ENCODE measurements at regions of chrX and their contacts with region 1.

Region 1: DNA sequence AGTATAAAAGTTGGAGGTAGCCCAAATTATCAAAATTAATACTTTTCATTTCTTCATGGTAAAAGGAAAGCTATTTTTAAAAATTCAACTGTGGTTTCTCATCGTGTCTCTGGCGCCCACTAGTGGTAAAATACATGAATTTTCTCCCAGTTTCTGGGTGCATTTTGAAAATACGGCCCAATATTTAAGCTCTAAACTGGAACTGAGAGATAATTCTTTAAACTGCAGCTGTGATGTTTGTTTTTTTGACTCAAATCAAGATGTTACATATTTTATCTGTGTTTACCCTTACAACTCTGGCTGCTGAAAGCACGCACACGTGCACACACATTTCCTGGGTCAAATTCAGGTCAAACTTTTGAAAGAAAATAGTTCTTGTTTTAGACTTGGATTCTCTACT is 123.9 kb upstream of the ACSL4 start:
- DNase-seq: no peak
- H3K4me3 Mint-ChIP-seq: no peak overlapping the region
- H3K27ac Mint-ChIP-seq: no peak overlapping the region
- H3K4me1 Mint-ChIP-seq: peaks cover 3% of the 10 kb centered on the region
- H3K27me3 Mint-ChIP-seq: no peaks in the 10 kb centered on the region

Region 2: GRCh38 chrX:109485470-109486340 is 371.3 kb before region 1 on chrX:
- CTCF ChIA-PET with region 1: interaction called, 21 read pairs
- POLR2A ChIA-PET with region 1: no interaction called
- intact Hi-C with region 1: loop called (anchors 2 kb)
- DNase-seq: peak; percentile 64
- H3K4me3 Mint-ChIP-seq: no peak overlapping the region
- H3K27ac Mint-ChIP-seq: no peak overlapping the region
- H3K4me1 Mint-ChIP-seq: no peaks in the 10 kb centered on the region
- H3K27me3 Mint-ChIP-seq: peaks cover 3% of the 10 kb centered on the region

Region 3: DNA sequence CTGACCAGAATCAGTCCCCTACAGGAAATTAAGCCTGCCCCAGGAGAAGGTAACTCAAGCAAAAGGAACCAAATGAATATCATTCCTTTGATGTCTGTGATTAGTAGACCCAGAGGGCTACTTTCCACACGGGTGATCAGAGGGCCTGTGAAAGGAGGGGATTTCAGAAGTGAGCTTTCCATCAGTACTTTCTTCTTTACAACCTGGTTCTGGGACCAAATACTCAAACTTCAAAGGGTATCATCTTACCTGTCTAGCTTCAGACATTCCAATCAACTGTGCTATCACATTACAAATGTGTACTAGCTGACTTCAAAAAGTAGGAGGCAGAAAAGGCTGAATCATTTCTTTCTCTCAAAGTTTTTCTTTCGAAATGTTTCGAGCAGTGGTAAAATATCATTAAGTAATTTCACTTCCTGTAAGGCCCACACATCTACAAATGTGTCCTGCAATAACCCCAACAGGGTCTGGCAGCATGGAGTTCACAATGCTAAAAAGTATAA is 147.8 kb before region 1 on chrX:
- CTCF ChIA-PET with region 1: interaction called, 149 read pairs
- POLR2A ChIA-PET with region 1: interaction called, 3 read pairs
- intact Hi-C with region 1: loop called (anchors 1 kb)
- DNase-seq: no peak
- H3K4me3 Mint-ChIP-seq: no peak overlapping the region
- H3K27ac Mint-ChIP-seq: peak overlapping the region; percentile 46
- H3K4me1 Mint-ChIP-seq: peaks cover 64% of the 10 kb centered on the region
- H3K27me3 Mint-ChIP-seq: no peaks in the 10 kb centered on the region

Region 4: GRCh38 chrX:109714340-109714958 is 142.5 kb before region 1 on chrX:
- CTCF ChIA-PET with region 1: interaction called, 149 read pairs
- POLR2A ChIA-PET with region 1: interaction called, 3 read pairs
- intact Hi-C with region 1: loop called (anchors 1 kb)
- DNase-seq: no peak
- H3K4me3 Mint-ChIP-seq: no peak overlapping the region
- H3K27ac Mint-ChIP-seq: no peak overlapping the region
- H3K4me1 Mint-ChIP-seq: peaks cover 42% of the 10 kb centered on the region
- H3K27me3 Mint-ChIP-seq: no peaks in the 10 kb centered on the region

Region 5: GRCh38 chrX:109826954-109827708 is 29.8 kb before region 1 on chrX:
- CTCF ChIA-PET with region 1: interaction called, 10 read pairs
- POLR2A ChIA-PET with region 1: interaction called, 5 read pairs
- intact Hi-C with region 1: no loop called
- DNase-seq: no peak
- H3K4me3 Mint-ChIP-seq: no peak overlapping the region
- H3K27ac Mint-ChIP-seq: no peak overlapping the region
- H3K4me1 Mint-ChIP-seq: peaks cover 2% of the 10 kb centered on the region
- H3K27me3 Mint-ChIP-seq: no peaks in the 10 kb centered on the region

Region 6: DNA sequence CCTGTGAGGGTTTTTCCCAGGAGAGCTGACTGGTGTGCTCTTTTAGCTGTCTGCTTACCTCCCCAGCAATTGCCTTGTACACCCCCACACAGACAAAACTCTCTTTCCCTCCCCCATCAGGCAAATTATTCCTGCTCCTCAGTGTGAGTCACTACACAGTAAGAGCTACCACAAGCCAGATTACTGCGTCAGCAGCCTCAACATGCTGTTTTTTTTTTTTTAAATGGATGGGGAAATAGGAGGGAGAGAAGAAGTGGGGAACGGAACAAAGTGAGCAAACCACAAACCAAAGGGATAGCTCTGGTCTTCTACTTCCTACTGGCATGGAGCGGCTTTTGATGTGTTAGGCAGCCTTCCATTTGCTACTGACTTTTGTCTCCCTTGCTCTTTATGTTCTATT is 16.4 kb before region 1 on chrX:
- CTCF ChIA-PET with region 1: interaction called, 10 read pairs
- POLR2A ChIA-PET with region 1: interaction called, 3 read pairs
- intact Hi-C with region 1: no loop called
- DNase-seq: peak; percentile 18
- H3K4me3 Mint-ChIP-seq: no peak overlapping the region
- H3K27ac Mint-ChIP-seq: no peak overlapping the region
- H3K4me1 Mint-ChIP-seq: peaks cover 3% of the 10 kb centered on the region
- H3K27me3 Mint-ChIP-seq: no peaks in the 10 kb centered on the region

Region 7: GRCh38 chrX:109890895-109891502 is 34.0 kb after region 1 on chrX:
- CTCF ChIA-PET with region 1: interaction called, 17 read pairs
- POLR2A ChIA-PET with region 1: no interaction called
- intact Hi-C with region 1: no loop called
- DNase-seq: peak; percentile 52
- H3K4me3 Mint-ChIP-seq: no peak overlapping the region
- H3K27ac Mint-ChIP-seq: no peak overlapping the region
- H3K4me1 Mint-ChIP-seq: no peaks in the 10 kb centered on the region
- H3K27me3 Mint-ChIP-seq: no peaks in the 10 kb centered on the region

Region 8: DNA sequence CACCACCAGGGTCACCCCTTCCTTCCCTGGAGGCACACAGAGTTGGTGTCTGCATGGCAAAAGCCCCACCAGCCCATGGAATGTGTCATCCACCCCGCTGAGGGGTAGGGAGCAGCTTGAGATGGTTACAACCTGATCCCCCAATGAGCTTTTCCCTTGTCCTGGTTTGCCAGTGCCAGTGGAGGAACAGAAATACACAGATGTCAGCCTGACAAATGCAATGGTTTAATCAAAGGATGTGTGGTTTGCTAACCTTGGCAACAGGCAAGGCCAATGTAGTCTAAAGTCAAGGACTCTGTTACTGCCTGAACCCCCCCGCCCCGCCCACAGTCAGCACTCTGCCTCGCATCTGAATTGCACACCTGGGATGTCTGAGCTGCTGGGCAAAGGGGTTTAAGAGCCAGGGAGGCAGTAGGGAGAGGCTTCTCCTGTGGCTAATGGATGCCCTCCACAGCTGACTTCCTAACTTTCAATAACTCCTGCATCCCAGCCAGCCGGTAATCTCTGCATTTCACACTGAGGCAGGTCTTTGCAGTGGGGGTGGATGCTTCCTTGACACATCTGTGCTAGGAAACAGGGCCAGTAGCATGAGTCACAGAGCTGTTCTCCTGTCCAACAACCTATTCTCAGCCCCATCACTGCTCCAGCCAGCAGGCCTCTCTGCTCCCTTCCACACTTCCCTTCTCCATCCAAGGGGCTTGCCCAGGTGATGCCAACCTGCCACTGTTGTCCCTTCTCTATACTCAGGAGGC is 323.4 kb after region 1 on chrX:
- CTCF ChIA-PET with region 1: no interaction called
- POLR2A ChIA-PET with region 1: no interaction called
- intact Hi-C with region 1: no loop called
- DNase-seq: no peak
- H3K4me3 Mint-ChIP-seq: no peak overlapping the region
- H3K27ac Mint-ChIP-seq: no peak overlapping the region
- H3K4me1 Mint-ChIP-seq: peaks cover 18% of the 10 kb centered on the region
- H3K27me3 Mint-ChIP-seq: no peaks in the 10 kb centered on the region